ENCODE measurements at regions of chr10 and their contacts with region 1.

Region 1: GRCh38 chr10:51422311-51423120 is 276.9 kb downstream of the CSTF2T start:
- DNase-seq: peak; percentile 60
- H3K4me3 Mint-ChIP-seq: no peak overlapping the region
- H3K27ac Mint-ChIP-seq: no peak overlapping the region
- H3K4me1 Mint-ChIP-seq: no peaks in the 10 kb centered on the region
- H3K27me3 Mint-ChIP-seq: peaks cover 61% of the 10 kb centered on the region
- CTCF ChIP-seq: peak; percentile 70

Region 2: DNA sequence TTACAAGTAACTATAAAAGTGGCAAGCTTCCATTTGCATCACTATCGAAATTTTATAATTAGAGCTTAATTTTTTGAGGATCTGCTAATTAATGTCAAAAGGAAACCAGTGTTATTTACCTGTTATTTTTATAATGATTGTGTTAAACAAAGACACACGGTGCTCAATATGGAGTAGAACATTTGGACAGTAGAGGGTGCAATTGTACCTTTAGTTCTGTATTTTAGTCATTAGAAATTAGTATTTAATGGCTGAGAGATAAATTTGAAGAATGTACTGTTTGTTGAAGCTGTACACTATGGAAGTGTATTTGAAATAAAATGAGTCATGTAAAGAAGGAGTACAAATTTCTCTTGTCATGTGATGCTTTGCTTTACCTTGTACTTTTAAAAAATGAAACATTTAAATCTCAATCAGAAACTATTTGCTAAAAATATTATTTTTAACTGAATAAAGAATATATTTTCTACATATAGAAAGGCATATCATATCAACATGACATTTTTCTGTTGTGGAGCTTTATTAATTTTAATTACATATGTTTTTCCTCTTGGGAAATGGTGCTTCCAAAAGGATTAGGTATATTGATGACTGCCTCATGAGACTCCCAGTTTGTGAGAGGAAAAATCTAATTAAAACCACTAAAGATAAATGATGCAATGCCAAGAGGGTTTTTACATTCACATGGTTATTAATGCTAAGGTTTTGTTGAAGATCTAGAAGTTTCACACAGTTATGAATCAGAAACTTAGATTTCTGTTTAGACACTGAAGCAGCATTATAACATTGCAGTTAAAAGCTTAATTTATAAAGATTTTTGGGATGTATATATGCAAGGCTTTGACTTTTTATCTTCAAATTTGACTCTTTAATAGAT is 358.6 kb before region 1 on chr10:
- CTCF ChIA-PET with region 1: interaction called, 71 read pairs
- POLR2A ChIA-PET with region 1: no interaction called
- intact Hi-C with region 1: loop called (anchors 1 kb)
- DNase-seq: peak; percentile 30
- H3K4me3 Mint-ChIP-seq: no peak overlapping the region
- H3K27ac Mint-ChIP-seq: no peak overlapping the region
- H3K4me1 Mint-ChIP-seq: no peaks in the 10 kb centered on the region
- H3K27me3 Mint-ChIP-seq: peaks cover 60% of the 10 kb centered on the region
- CTCF ChIP-seq: peak; percentile 54

Region 3: GRCh38 chr10:51377070-51377931 is 45.2 kb before region 1 on chr10:
- CTCF ChIA-PET with region 1: no interaction called
- POLR2A ChIA-PET with region 1: no interaction called
- intact Hi-C with region 1: no loop called
- DNase-seq: no peak
- H3K4me3 Mint-ChIP-seq: no peak overlapping the region
- H3K27ac Mint-ChIP-seq: no peak overlapping the region
- H3K4me1 Mint-ChIP-seq: no peaks in the 10 kb centered on the region
- H3K27me3 Mint-ChIP-seq: no peaks in the 10 kb centered on the region
- CTCF ChIP-seq: no peak

Region 4: GRCh38 chr10:51389415-51390321 is 32.8 kb before region 1 on chr10:
- CTCF ChIA-PET with region 1: interaction called, 15 read pairs
- POLR2A ChIA-PET with region 1: no interaction called
- intact Hi-C with region 1: loop called (anchors 1 kb)
- DNase-seq: peak; percentile 64
- H3K4me3 Mint-ChIP-seq: no peak overlapping the region
- H3K27ac Mint-ChIP-seq: no peak overlapping the region
- H3K4me1 Mint-ChIP-seq: peaks cover 19% of the 10 kb centered on the region
- H3K27me3 Mint-ChIP-seq: no peaks in the 10 kb centered on the region
- CTCF ChIP-seq: peak; percentile 72

Region 5: DNA sequence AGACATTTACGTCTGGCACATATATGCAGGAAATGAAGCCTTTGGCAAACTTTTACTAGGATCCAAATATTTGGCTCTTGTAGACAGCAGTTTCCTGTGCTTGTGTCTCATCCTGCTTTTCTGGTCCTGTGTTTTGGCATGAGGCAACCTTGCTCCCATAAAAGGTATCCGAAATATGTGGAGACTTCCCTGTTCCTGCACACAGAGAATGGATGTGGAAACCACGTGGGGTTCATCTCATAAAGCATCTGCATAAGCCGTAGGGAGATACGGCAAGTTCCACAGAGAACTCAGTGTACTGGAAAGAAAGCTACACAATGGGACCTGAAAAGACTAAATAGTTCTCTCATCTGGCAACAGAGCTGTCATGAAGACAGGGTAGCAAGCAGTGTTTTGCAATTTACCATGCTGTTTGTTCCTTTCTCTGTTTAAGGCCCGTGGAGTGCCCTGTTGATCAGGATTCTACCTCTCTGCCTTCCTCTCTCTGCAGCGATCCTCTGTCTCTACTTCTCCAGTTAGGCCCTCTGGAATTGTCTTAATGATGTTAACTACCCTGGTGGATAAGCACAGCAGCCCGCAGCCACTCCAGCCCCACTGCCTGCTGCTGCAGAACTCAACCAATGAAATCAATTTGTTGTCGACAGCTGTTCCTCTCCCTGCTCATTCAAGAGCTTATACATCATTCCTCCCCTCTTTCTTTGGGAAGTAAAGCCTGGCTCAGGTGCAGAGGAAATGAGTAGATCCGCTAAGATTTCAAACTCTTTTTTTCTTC is 16.8 kb before region 1 on chr10:
- CTCF ChIA-PET with region 1: interaction called, 14 read pairs
- POLR2A ChIA-PET with region 1: no interaction called
- intact Hi-C with region 1: no loop called
- DNase-seq: peak; percentile 55
- H3K4me3 Mint-ChIP-seq: no peak overlapping the region
- H3K27ac Mint-ChIP-seq: no peak overlapping the region
- H3K4me1 Mint-ChIP-seq: peaks cover 5% of the 10 kb centered on the region
- H3K27me3 Mint-ChIP-seq: no peaks in the 10 kb centered on the region
- CTCF ChIP-seq: no peak

Region 6: GRCh38 chr10:51501396-51501795 is 78.9 kb after region 1 on chr10:
- CTCF ChIA-PET with region 1: no interaction called
- POLR2A ChIA-PET with region 1: no interaction called
- intact Hi-C with region 1: no loop called
- DNase-seq: no peak
- H3K4me3 Mint-ChIP-seq: no peak overlapping the region
- H3K27ac Mint-ChIP-seq: no peak overlapping the region
- H3K4me1 Mint-ChIP-seq: no peaks in the 10 kb centered on the region
- H3K27me3 Mint-ChIP-seq: peaks cover 19% of the 10 kb centered on the region
- CTCF ChIP-seq: no peak